Cardiac septum (tissue), 1 donor: ENCODE measurements at regions of chr19 and their contacts with region 1.

Region 1: GRCh38 chr19:12551060-12551832 is at the start of gene ZNF564:
- DNase-seq: peak; percentile 98
- total RNA-seq, gene ZNF564: 9.3 TPM

Region 2: DNA sequence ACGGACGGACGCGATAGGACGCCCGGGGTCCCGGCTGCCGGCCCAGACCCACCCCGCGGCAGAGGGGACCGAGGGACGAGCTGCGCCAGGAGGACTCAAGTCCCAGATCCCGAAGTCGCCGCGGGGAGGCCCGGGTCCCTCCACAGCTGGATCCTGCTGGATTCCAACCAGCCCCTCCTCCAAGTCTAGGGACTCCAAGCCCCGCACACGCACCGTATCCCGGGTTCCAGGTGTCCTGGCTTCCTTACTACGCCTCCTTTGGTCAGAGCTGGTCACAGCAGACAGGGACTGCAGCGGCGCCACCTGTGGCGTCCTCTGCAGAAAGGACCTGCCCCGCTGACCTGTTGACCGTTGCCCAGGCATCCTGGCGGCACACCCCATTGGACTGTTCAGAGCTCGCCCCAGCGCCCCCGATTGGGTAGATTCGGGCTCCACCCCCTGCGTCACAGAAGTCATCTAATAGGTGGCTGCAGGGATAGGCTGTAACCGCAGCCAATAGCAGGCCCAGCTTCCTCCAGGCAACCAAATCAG is 37.6 kb before region 1 on chr19:
- intact Hi-C with region 1: no loop called
- DNase-seq: no peak

Region 3: DNA sequence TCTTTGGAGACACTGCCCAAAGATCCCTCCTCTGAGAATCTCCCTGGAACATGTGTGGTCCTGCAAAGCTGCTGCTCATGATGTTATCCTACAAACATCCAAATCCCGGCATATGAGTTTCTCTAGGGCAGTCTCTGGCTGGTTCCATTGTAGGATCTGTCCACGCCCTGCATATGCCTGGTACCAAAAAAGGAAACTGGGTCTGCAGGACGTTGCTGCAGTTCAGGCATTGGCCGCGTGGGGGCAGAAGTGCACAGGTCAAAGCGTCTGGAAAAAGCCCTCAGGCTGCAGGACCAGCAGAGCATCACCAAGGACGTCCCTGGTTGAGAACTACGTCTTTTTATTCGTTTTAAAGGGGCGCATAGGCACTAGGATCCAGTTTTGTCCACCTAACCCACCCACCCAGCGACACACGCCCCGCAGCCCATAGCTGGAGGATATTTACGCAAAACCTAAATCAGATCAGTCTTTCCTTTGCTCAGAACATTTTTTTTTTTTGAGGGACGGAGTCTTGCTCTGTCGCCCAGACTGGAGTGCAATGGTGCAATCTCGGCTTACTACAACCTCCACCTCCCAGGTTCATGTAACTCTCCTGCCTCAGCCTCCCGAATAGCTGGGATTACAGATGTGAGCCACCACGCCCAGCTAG is 12.9 kb after region 1 on chr19:
- intact Hi-C with region 1: no loop called
- DNase-seq: peak; percentile 94

Region 4: GRCh38 chr19:12610540-12611360 is 59.5 kb after region 1 on chr19 and contains the starts of genes ZNF490 and ZNF791:
- intact Hi-C with region 1: loop called (anchors 2 kb)
- DNase-seq: peak; percentile 99
- total RNA-seq, gene ZNF490: 5.1 TPM
- total RNA-seq, gene ZNF791: 14.8 TPM